PC-3 (cell line): ENCODE measurements at regions of chr17 and their contacts with region 1.

Region 1: GRCh38 chr17:31156326-31156725 is 61.5 kb downstream of the NF1 start:
- DNase-seq: no peak
- ATAC-seq: no peak
- H3K4me3 ChIP-seq: no peak overlapping the region
- H3K27ac ChIP-seq: no peak overlapping the region
- H3K4me1 ChIP-seq: peaks cover 9% of the 10 kb centered on the region; the same call in 1 of the 2 replicates
- H3K27me3 ChIP-seq: no peaks in the 10 kb centered on the region
- CTCF ChIP-seq: no peak

Region 2: DNA sequence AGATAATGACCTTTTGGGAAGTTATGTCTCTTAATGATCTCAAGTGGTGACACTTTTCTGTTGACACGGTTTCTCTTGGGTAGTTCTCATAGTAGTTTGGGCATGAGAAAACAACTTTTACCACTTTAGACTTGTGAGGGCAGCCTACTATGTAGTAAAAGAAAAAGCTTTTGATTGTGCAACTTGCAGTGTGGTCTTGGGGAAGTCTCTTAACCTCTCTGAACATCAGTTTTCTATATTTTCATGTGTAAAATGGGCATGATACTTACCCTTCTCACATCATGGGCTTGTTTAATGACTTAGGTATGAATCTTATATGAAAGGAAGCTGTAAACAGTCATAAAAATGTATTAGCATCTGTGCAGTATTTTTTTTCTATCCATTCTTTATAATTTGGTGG is 50.3 kb before region 1 on chr17:
- CTCF ChIA-PET with region 1: no interaction called
- POLR2A ChIA-PET with region 1: no interaction called
- intact Hi-C with region 1: loop called (anchors 5 kb)
- DNase-seq: no peak
- ATAC-seq: no peak
- H3K4me3 ChIP-seq: no peak overlapping the region
- H3K27ac ChIP-seq: no peak overlapping the region
- H3K4me1 ChIP-seq: no peaks in the 10 kb centered on the region
- H3K27me3 ChIP-seq: no peaks in the 10 kb centered on the region
- CTCF ChIP-seq: no peak